GM18951 (cell line): ENCODE measurements at regions of chr5 and their contacts with region 1.

Region 1: DNA sequence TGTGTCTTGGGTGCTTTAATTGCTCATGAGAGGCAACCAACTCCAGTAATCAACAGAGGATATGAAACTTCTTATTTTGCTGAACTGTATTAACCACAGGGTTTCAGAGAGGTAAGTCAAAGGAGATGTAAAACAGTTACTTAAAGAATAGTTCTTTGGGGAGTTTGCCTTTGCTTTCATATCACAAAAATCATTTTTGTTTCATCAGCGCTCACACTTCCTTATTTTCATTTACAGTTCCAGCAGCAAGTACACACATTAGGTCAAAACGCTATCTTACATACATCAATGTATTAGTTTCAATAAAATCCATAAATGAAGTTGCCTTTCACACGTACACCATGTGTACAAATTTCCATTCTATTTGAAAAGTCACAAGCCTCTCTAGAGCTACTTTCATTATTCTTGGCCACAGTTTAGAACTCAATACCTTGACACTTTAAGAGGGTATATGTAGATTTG is 50.1 kb downstream of the ST8SIA4 start:
- POLR2A ChIP-seq: no peak

Region 2: GRCh38 chr5:100903039-100903887 is 50.2 kb after region 1 on chr5 and contains the start of gene ST8SIA4:
- in situ Hi-C with region 1: loop called (anchors 5 kb)
- POLR2A ChIP-seq: peak; percentile 95